Naive thymus-derived CD4-positive, alpha-beta T cell (primary cell): ENCODE measurements at regions of chr18 and their contacts with region 1.

Region 1: DNA sequence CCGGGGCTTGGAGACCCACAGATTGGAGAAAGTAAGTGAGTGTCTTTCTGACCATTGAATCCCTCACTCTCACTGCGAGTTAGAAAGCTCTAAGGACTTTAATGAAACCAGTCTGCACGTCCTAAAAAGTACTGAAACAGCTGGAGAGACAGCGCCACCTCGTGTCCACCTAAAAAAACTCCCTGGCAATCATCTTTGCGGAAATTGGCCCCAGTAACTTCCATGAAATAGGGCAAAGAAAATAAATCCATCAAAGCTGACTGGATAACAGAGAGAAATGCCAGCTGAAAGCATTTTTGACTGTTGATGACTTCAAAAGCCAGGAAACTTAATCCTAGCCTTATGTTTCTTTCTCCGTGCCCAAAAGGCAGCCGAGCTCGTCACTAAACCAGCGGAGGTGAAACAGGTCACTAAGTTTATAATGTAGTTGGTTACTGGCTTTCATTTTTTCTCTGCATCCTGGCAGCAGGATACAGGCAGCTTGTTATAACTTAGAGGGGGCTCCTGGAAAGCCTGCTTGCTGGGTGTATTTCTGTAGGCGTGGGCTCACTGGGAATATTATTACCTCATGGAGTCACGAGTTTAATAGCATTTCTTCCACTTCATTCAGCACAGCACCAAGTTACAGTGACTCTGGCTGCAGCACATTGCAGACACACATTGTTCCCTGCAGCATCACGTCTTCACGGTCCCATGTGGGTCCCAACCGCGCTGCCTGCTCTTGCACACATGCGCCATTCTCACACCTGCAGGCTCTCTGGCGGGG is 266.5 kb downstream of the HRH4 start:
- DNase-seq: peak in 8 of 9 donors; percentile 8 to 53 (median 38)
- ATAC-seq: no peak
- H3K4me3 ChIP-seq: no peak overlapping the region
- H3K4me3 Mint-ChIP-seq: peak overlapping the region in 1 of 10 donors; percentile 6
- H3K27ac ChIP-seq: no peak overlapping the region
- H3K27ac Mint-ChIP-seq: no peak overlapping the region
- H3K4me1 ChIP-seq: peaks cover 0 to 5% of the 10 kb centered on the region in 2 donors
- H3K4me1 Mint-ChIP-seq: peaks cover 0 to 3% (median 0%) of the 10 kb centered on the region in 7 donors
- H3K27me3 ChIP-seq: peaks cover 0 to 2% of the 10 kb centered on the region in 2 donors
- H3K27me3 Mint-ChIP-seq: peaks cover 0 to 27% (median 15%) of the 10 kb centered on the region in 5 donors

Region 2: DNA sequence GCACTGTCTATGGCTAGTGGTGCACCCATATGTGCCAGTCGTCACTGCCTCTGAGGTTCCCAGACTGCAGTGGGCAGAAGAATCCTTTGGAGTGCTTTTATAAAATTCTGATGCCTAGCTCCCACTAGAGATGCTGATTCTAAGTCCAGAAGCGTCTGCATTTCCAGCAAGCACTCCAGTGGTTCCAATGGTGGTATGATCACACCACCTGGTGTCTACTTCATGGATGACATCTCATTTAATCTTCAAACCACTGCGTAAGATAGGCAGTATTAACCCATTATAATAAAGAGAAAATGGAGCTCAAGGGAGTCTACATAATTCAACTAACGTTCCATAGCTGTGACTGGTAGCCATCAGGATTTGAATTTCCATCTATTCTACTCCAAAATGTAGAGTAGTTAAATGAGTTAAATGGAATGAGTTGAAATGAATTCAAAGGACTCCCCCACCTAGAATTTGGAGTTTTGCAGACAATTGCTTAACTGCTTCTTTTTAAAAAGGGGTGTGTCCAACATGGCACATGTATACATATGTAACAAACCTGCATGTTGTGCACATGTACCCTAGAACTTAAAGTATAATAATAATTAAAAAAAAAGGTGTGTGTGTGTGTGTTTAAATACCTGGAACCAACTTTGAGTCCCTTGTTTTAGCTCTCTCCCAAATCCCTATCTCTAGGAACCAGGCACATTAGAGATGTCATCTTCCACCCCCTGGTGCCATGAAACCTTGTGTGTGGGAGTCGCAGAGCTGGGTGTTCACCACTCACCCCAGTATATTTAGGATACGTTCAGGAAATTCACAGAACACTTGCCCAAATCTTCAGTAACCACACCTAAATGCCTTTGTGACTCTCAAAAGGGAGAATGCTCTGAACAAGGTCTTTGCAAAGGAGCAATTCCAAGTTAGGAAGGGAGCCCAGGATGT is 1023.6 kb before region 1 on chr18:
- CTCF ChIA-PET with region 1: no interaction called
- POLR2A ChIA-PET with region 1: no interaction called
- intact Hi-C with region 1: no loop called
- DNase-seq: peak in 7 of 9 donors; percentile 18 to 62 (median 47)
- ATAC-seq: peak; percentile 77
- H3K4me3 ChIP-seq: no peak overlapping the region
- H3K4me3 Mint-ChIP-seq: no peak overlapping the region
- H3K27ac ChIP-seq: no peak overlapping the region
- H3K27ac Mint-ChIP-seq: no peak overlapping the region
- H3K4me1 ChIP-seq: no peaks in the 10 kb centered on the region
- H3K4me1 Mint-ChIP-seq: no peaks in the 10 kb centered on the region
- H3K27me3 ChIP-seq: no peaks in the 10 kb centered on the region
- H3K27me3 Mint-ChIP-seq: peaks cover 8 to 65% (median 21%) of the 10 kb centered on the region in 5 donors

Region 3: DNA sequence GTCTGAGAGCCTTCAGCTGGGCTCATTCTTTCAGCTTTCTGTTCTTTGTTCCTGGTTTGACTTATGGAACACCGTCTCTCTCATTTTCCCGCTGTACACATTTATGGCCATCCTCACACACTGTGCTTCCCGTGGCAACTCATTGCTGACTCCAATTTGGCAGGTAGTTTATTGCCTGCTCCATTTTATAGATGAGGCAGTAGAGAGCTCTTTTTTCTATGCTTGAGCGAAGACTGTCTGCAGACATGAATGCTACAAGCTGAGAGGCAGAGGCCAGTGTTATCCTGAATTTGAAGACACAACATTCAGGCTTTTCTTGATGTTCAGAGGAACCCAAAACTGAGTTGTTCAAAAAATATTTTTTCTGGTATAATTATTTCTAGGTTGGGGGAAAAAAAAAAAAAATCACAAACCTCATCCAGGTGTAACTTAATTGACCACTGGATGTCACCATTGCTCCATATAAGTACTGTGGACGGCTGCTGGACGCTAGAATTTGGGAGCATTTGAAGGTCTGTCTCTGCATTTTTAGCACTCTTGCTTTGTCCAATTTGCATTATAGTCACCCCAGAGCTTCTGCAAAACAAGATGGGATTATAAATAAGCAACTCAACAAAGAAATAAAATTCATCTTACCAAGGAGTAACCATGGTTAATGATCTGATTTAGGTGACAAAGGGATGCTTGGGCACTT is 183.0 kb before region 1 on chr18:
- CTCF ChIA-PET with region 1: no interaction called
- POLR2A ChIA-PET with region 1: no interaction called
- intact Hi-C with region 1: loop called in 1 of 2 experiments (anchors 1 kb)
- DNase-seq: no peak
- ATAC-seq: no peak
- H3K4me3 ChIP-seq: no peak overlapping the region
- H3K4me3 Mint-ChIP-seq: no peak overlapping the region
- H3K27ac ChIP-seq: no peak overlapping the region
- H3K27ac Mint-ChIP-seq: no peak overlapping the region
- H3K4me1 ChIP-seq: no peaks in the 10 kb centered on the region
- H3K4me1 Mint-ChIP-seq: no peaks in the 10 kb centered on the region
- H3K27me3 ChIP-seq: no peaks in the 10 kb centered on the region
- H3K27me3 Mint-ChIP-seq: peaks cover 0 to 29% (median 7%) of the 10 kb centered on the region in 5 donors

Region 4: DNA sequence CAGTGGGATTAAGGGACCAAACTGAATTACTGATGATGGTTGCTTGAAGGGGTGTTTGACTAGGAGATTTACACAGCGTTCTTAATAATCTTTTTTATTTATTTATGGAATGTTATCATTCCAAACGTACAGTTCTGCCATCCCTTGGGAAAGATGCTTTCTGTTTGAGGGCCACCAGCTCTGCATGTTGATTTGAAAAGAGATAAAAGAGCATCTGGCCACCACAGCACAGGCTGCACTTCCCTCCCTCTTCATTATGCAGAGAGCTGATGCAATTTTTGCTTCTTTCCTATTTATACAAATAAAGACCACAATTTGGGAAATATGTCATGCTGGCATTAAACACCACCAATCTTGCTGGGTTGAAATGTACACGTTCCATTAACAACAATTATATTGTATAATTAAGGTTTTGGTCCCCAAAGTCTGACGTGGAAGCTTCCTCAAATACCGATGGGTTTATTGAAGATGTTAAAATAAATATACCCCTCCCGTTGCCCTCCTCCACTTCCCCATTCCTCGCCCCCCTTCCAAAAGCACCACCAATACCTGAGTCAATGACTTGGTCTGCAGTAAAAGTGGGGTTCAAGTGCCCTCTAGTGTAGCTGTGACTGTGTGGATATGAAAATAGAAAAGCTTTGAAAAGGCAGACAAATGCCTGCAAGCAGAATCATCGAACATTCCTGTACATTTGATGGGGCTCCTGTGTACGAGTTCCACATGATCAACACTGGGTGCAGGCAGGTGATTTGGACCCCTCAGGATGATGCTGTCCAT is 54.6 kb before region 1 on chr18:
- CTCF ChIA-PET with region 1: no interaction called
- POLR2A ChIA-PET with region 1: no interaction called
- intact Hi-C with region 1: loop called in 1 of 2 experiments (anchors 10 kb)
- DNase-seq: peak in 3 of 9 donors; percentile 4 to 21 (median 15)
- ATAC-seq: no peak
- H3K4me3 ChIP-seq: no peak overlapping the region
- H3K4me3 Mint-ChIP-seq: no peak overlapping the region
- H3K27ac ChIP-seq: no peak overlapping the region
- H3K27ac Mint-ChIP-seq: no peak overlapping the region
- H3K4me1 ChIP-seq: no peaks in the 10 kb centered on the region
- H3K4me1 Mint-ChIP-seq: no peaks in the 10 kb centered on the region
- H3K27me3 ChIP-seq: no peaks in the 10 kb centered on the region
- H3K27me3 Mint-ChIP-seq: peaks cover 6 to 18% (median 11%) of the 10 kb centered on the region in 5 donors